ENCODE measurements at regions of chr1 and their contacts with region 1.

Region 1: DNA sequence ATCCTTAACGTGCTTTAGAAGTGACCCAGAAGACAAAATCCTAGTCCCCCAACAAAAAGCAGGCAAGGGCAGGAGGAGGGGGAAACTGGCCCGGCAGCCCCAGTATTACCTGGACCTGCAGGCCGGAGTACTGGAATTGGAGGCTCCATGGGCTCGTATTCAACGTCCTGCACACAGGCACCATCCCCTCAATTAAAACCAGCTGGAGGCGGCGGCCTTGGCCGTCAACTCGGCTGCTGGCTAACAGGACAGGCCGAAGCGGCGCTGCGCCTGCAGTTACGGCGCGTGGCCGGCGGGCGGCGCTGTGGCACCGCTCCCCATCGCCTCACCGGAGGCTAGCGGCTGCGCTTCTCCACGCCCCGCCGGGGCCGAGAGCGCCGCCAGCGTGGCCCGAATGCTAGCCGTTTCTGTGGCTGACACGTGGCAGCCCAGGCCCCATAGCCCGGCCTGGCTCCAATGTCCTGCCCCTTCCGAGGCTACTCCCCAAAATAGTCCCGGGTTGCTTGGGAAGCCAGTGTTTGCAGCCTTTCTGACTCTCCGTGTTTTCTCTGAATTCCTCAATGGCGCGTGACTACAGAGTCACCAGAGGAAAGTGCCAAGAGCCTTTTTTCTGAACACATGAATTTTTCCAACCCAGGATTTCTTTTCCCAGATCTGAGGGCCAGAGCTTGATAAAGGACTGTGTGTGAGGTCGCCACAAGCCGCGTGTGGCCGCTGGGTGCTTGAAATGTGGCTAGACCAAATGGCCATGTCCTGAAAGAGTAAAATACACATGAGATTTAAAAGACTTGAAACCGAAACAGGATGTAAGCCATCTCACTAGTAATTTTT is 82.5 kb downstream of the HHIPL2 start:
- H3K4me3 Mint-ChIP-seq: peak overlapping the region; percentile 75
- H3K27ac Mint-ChIP-seq: peak overlapping the region; percentile 96
- H3K4me1 Mint-ChIP-seq: peaks cover 9% of the 10 kb centered on the region
- H3K27me3 Mint-ChIP-seq: no peaks in the 10 kb centered on the region

Region 2: GRCh38 chr1:222370081-222370912 is 95.1 kb before region 1 on chr1:
- intact Hi-C with region 1: no loop called
- H3K4me3 Mint-ChIP-seq: no peak overlapping the region
- H3K27ac Mint-ChIP-seq: no peak overlapping the region
- H3K4me1 Mint-ChIP-seq: no peaks in the 10 kb centered on the region
- H3K27me3 Mint-ChIP-seq: no peaks in the 10 kb centered on the region

Region 3: DNA sequence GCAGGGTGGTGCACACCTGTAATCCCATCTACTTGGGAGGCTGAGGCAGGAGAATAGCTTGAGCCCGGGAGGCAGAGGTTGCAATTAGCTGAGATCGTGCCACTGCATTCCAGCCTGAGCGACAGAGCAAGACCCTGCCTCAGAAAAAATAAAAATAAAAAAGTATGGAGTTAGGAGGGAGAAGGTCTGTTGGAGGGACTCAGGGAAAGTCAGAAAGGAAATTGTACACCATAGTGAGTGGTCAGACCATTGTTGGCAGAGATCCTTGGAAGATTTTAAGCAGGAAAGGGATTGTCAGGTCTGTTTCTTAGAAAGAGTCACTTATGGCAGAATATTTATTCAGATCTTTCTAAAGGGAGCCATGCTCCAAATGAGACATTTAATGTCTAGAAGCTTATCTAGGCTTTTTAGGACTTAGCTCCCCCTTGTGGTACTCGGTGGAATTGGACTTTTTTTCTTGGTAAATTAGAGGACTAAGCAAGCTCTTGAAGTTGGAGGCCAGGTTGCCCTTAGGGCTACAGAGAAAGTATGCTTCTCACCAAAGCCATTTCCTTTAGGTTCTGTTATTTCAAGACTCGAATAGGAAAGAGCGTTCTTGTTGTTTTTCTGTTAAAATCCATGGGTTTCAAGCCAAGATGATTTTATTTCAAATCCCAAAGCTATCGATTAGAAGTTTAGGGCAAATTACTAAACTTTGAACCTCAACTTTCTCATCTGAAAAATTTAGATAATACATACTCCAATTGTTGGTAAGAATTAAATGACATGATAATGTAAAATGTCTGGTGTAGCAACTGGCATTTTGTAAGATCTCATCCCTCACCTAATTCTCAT is 169.0 kb after region 1 on chr1:
- intact Hi-C with region 1: loop called (anchors 1 kb)
- H3K4me3 Mint-ChIP-seq: no peak overlapping the region
- H3K27ac Mint-ChIP-seq: no peak overlapping the region
- H3K4me1 Mint-ChIP-seq: no peaks in the 10 kb centered on the region
- H3K27me3 Mint-ChIP-seq: no peaks in the 10 kb centered on the region

Region 4: DNA sequence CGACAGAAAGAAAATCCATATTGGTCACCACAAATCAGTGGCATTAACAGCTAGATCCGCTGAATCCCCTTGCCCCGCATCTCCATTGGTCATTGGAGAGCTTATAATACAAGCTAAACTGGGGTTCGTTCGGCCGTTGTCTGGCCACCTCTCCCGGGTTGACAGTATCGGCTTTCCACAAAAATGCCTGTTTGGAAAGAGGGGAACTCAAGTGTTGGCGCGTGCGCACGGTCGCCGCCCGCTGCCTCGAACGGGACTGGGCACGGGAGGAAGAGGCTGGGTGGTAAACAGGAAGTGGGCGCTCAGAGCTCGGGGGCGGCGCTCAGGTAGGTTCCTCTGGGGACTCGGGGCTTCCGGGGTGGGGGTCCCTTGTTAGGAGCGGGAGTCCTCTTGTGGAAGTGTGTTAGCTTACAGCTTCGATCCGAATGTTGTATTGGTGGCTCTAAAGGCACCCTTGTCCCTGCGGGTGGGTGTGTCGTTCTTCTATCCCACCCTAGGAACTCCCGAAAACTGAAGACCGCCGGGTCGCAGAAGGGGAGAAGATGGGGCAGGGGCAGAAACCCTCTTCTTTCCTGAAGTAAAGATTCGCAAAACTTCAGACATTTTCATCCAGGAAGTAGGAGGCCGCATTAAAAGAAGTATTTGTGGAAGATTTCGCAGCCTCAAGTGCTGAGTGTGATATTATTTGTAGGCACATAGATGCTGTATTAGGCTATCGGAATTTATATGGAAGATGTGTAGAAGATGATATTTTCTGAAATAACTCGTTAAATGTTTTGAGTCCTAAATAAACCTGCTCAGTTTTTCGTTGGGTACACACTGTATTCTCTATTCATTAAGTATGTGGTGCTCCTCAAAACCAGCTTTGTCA is 247.9 kb after region 1 on chr1:
- intact Hi-C with region 1: loop called (anchors 2 kb)
- H3K4me3 Mint-ChIP-seq: peak overlapping the region; percentile 96
- H3K27ac Mint-ChIP-seq: peak overlapping the region; percentile 95
- H3K4me1 Mint-ChIP-seq: peaks cover 33% of the 10 kb centered on the region
- H3K27me3 Mint-ChIP-seq: no peaks in the 10 kb centered on the region

Region 5: DNA sequence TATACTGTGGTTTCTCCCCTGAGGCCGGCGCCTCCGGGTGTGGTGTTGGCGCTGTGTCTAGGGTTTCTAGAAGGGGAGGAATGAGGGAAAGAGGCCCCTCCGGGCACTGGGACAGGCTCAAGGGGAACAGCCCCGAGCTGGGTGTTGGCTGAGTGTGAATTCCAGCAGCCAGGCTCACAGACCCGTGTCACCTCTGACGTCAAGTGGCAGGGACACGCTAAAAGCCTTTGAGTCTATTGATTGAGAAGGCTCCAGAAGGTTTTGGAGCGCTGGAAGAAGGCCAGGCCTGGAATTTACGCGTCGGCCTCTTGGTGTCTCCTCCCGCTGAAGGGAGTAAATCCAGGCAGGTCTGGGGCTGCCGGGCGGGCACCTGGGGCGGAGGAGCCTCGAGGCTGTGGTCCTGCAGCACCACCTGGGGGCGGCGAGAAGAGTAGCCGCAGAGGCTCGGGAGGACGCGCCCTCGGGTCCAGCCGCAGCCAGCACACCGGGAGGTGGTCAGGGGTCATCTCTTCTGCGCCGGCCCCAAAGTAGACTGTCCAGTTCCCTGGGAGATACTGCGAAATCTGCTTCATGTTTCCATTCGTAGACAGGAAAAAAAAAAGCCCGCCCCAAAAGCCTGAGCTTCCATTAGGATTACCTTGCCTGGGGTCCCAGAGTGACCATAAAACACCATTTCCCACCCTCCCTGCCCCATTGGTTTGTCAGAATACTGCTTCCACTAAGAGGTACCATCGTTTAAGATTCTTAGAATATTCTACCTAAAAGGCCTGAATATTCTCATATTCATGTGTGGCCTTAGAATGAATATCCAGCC is 616.0 kb after region 1 on chr1:
- intact Hi-C with region 1: loop called (anchors 5 kb)
- H3K4me3 Mint-ChIP-seq: peak overlapping the region; percentile 58
- H3K27ac Mint-ChIP-seq: no peak overlapping the region
- H3K4me1 Mint-ChIP-seq: peaks cover 3% of the 10 kb centered on the region
- H3K27me3 Mint-ChIP-seq: peaks cover 10% of the 10 kb centered on the region

Measured in dendritic cell treated with granulocyte-macrophage colony-stimulating factor and Interleukin-4, amounts not matched to agents 40 ng/mL and 50 ng/mL, for 4 days (primary cell).